Psoas muscle (tissue), 8 donors: ENCODE measurements at regions of chrX and their contacts with region 1.

Region 1: DNA sequence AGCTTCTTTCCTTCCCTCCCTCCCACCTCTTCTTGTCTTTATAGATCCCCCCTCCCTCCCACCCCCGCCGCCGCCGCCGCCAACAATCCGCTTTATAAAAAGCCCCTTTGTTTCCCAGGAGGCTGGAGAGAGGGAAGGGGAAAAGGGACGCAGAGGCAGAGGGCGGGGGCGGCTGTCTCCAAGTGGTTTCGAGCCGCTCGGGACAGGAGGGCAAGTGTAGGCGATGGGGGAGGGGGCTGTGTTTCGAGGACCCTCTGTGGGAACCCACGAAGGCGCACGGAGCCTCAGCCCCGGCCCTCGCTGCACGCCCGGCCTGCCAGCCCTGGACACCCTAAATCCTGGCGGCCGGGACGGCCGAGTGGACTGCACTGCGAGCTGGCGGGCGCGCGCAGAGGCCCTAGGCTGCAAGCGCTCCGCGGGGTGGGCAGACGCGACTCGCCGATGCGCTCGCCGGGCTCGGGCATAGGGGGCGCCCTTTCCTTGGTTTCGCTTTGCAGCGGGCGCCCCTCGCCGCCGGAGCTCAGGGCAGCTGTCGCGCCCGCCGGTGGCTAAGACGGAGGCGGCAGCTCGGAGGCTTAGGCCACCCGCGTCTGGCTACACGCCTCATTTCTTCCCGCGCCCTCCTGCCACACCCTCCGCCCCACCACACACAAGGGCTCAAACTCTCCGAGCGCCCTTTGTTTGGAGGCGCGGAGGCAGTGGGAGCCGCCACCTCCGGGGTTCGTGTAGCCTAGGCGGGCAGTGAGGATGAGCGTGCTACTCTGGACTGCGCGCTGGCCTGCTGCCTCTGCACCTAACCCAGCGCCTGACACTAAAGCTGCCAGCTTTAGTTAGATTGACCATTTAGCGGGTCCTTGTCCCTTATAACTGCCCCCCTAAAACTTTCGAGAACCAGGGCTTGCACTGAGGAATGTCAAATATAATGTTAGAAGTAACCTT is 2.2 kb downstream of the MAMLD1 start:
- DNase-seq: peak; percentile 75 to 87
- ATAC-seq: peak; percentile 71 to 78 (median 74)
- H3K4me3 ChIP-seq: peak overlapping the region; percentile 72
- H3K27ac ChIP-seq: peak overlapping the region; percentile 86
- H3K4me1 ChIP-seq: no peaks in the 10 kb centered on the region
- H3K27me3 ChIP-seq: peaks cover 0 to 6% (median 0%) of the 10 kb centered on the region in 3 donors
- CTCF ChIP-seq: peak; percentile 58

Region 2: GRCh38 chrX:149962859-149963757 is 402.2 kb before region 1 on chrX:
- intact Hi-C with region 1: loop called in 1 of 2 experiments (anchors 10 kb)
- DNase-seq: peak; percentile 35 to 54
- ATAC-seq: peak; percentile 87 to 94 (median 92)
- H3K4me3 ChIP-seq: no peak overlapping the region
- H3K27ac ChIP-seq: no peak overlapping the region
- H3K4me1 ChIP-seq: no peaks in the 10 kb centered on the region
- H3K27me3 ChIP-seq: no peaks in the 10 kb centered on the region
- CTCF ChIP-seq: peak; percentile 69

Region 3: DNA sequence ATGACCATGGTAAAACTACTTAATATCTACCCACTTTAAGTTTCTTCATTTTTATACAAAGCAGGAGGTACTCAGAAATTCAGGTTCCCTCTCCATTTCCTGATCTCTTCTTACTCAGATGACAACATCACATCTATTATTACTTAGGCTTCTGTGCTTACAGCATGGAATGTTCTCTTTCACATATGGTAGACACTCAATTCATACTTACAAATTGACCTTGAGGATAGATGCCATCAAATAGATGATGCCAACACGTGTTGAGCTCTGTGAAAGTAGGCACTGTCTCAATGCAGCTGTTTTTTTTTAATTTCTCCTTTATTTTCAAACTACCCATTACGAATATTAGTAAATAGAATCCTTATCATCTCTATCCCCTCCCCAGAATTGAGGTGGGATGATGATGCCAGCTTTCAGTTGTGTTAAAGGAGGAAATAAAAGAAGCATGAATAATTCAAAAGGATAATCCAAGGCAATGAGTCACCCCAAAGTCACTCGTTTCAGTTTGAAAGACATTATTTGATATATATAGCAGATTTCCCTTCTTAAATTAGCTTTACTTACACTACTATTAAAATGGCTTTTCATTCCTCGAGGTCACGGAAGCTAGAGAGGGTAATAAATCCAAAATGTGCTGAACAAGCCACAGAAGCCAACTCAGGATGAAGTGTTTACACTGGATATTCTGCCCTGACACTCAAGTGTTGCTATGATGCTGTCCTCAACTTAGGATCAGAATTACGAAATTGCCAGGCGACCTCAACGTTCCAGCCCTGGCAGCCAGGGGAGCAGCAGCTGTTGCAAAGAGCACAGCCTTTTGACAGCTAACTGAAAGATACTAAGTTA is 302.8 kb before region 1 on chrX:
- intact Hi-C with region 1: loop called in 1 of 2 experiments (anchors 10 kb)
- DNase-seq: peak; percentile 59 to 80
- ATAC-seq: peak; percentile 95 to 99 (median 97)
- H3K4me3 ChIP-seq: no peak overlapping the region
- H3K27ac ChIP-seq: peak overlapping the region; percentile 59
- H3K4me1 ChIP-seq: peaks cover 9% of the 10 kb centered on the region
- H3K27me3 ChIP-seq: no peaks in the 10 kb centered on the region
- CTCF ChIP-seq: peak; percentile 10

Region 4: GRCh38 chrX:150212672-150213480 is 152.4 kb before region 1 on chrX:
- intact Hi-C with region 1: loop called in 1 of 2 experiments (anchors 5 kb)
- DNase-seq: no peak
- ATAC-seq: peak; percentile 66 to 82 (median 72)
- H3K4me3 ChIP-seq: no peak overlapping the region
- H3K27ac ChIP-seq: peak overlapping the region; percentile 55
- H3K4me1 ChIP-seq: peaks cover 9% of the 10 kb centered on the region
- H3K27me3 ChIP-seq: peaks cover 0 to 4% (median 0%) of the 10 kb centered on the region in 3 donors
- CTCF ChIP-seq: peak; percentile 20

Region 5: DNA sequence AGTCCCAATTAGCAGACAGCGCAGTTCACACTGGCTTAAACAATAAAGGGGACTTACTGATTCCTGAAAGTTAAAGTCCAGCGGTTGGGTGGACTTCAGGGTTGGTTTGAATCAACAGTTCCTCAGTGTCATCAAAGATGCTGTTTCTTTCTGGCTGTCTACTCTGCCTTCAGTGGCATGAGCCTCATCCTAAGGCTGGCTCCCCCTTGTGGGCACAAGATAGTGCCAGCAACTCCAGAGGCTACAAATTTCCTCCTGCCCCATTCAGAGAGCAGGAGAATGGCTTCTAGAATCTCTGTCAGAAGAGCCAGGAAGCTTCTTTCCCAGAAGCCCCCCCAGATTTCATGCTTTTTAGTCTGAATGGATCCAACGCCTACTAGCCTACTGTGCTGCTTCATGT is 120.7 kb after region 1 on chrX:
- intact Hi-C with region 1: loop called (anchors 5 to 10 kb)
- DNase-seq: peak; percentile 28 to 61
- ATAC-seq: peak; percentile 63 to 88 (median 78)
- H3K4me3 ChIP-seq: no peak overlapping the region
- H3K27ac ChIP-seq: no peak overlapping the region
- H3K4me1 ChIP-seq: no peaks in the 10 kb centered on the region
- H3K27me3 ChIP-seq: no peaks in the 10 kb centered on the region
- CTCF ChIP-seq: peak; percentile 62

Region 6: DNA sequence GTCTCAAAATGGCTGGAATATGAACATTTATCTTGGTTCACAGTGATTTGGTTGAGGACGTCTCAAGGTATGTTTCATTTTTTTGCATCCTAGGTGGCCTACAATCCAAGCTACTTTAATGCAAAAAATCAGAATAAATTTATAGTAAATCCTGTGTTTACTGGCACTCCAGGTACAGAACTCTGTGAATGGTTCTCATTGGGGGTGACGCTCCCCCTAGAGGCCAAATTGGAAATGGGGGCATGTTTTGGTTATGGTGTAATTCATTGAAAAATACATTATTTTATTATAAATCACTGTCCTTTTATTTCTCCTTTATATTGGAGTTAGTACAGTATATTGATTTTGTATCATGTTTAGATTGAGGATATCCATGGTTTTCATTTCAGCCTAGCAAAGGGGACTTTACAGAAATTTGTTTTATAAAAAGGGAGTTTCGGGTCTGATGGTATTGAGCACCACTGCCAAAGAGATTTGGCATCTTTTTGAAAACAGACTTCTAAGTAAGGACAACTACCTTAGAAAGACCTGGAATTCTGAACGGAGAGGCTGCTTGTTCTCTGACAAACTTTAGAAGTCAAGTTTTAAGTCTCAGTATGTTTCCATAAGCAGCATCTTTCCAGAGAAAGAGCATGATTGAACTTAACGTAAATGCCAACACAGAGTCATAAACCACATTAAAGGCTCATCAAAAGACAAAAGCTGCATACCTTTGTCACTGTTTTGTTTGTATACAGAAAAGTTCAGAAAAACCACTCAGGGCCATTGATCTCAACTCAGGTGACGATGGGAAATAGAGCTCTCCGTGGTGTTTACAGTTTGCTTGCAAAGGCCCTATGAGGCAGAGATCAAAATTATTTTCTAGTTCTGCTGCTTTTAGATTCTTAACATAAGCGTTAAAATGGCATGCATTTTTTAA is 222.5 kb after region 1 on chrX:
- intact Hi-C with region 1: loop called in 1 of 2 experiments (anchors 5 kb)
- DNase-seq: no peak
- ATAC-seq: no peak
- H3K4me3 ChIP-seq: no peak overlapping the region
- H3K27ac ChIP-seq: no peak overlapping the region
- H3K4me1 ChIP-seq: no peaks in the 10 kb centered on the region
- H3K27me3 ChIP-seq: no peaks in the 10 kb centered on the region
- CTCF ChIP-seq: peak; percentile 51